Gastrocnemius medialis (tissue), 4 donors: ENCODE measurements at regions of chr4 and their contacts with region 1.

Region 1: DNA sequence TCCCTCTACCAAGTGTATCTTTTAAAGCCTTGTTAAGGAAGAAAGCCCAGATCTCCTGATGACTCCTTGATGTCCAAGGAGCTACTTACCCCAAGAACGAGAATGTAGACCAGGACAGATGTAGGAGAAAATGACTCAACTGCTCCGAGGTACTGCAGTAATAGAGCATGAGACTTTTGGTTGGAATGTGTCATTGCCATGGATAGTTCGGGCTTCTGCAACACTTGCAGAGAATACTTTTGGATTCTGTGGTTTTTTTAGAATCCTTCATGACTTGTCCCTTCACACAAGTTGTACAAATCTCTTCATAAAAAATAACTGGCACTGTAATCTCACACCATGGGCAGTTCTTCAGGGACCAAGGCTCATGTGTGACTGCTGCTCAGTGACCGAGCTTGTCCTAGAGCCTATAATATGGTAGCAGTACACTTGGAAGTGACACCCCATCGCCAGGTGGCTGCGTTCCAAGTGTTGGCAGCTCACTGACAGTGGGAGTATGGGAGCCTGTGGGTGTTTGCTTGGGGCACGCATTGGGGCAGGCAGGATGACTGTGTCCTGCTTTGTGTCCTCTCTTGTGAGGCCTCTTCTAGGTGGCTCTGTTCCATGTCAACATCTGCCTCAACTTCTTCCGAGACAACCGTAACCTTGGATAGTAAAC is 87.9 kb upstream of the WDR1 start:
- DNase-seq: no peak
- ATAC-seq: no peak
- H3K4me3 ChIP-seq: no peak overlapping the region
- H3K27ac ChIP-seq: no peak overlapping the region
- H3K4me1 ChIP-seq: no peaks in the 10 kb centered on the region
- H3K27me3 ChIP-seq: no peaks in the 10 kb centered on the region
- CTCF ChIP-seq: no peak
- POLR2A ChIP-seq: no peak

Region 2: GRCh38 chr4:9735515-9735914 is 469.0 kb before region 1 on chr4:
- in situ Hi-C with region 1: no loop called
- intact Hi-C with region 1: no loop called
- DNase-seq: no peak
- ATAC-seq: no peak
- H3K4me3 ChIP-seq: no peak overlapping the region
- H3K27ac ChIP-seq: no peak overlapping the region
- H3K4me1 ChIP-seq: no peaks in the 10 kb centered on the region
- H3K27me3 ChIP-seq: no peaks in the 10 kb centered on the region
- CTCF ChIP-seq: no peak
- POLR2A ChIP-seq: no peak

Region 3: GRCh38 chr4:10232114-10232513 is 27.6 kb after region 1 on chr4:
- in situ Hi-C with region 1: no loop called
- intact Hi-C with region 1: loop called (anchors 2 kb)
- DNase-seq: no peak
- ATAC-seq: no peak
- H3K4me3 ChIP-seq: no peak overlapping the region
- H3K27ac ChIP-seq: no peak overlapping the region
- H3K4me1 ChIP-seq: no peaks in the 10 kb centered on the region
- H3K27me3 ChIP-seq: no peaks in the 10 kb centered on the region
- CTCF ChIP-seq: no peak
- POLR2A ChIP-seq: no peak